Activated CD4-positive, alpha-beta T cell treated with anti-CD3 and anti-CD28 coated beads for 36 hours (primary cell): ENCODE measurements at regions of chr16 and their contacts with region 1.

Region 1: GRCh38 chr16:75647492-75648264 is at the starts of genes KARS1 and TERF2IP:
- DNase-seq: peak; percentile 97
- ATAC-seq: peak; percentile 92
- H3K4me3 Mint-ChIP-seq: peak within 1 kb of the TSS; percentile 85
- H3K27ac Mint-ChIP-seq: peak within 1 kb of the TSS; percentile 98
- H3K4me1 Mint-ChIP-seq: peaks cover 54% of the 10 kb centered on the region
- H3K27me3 Mint-ChIP-seq: no peaks in the 10 kb centered on the region
- total RNA-seq, gene KARS1: 309 to 332 TPM
- total RNA-seq, gene TERF2IP: 70.6 to 72.6 TPM

Region 2: GRCh38 chr16:74666425-74667254 is 981.0 kb before region 1 on chr16 and contains the start of gene RFWD3:
- CTCF ChIA-PET with region 1: no interaction called
- POLR2A ChIA-PET with region 1: no interaction called
- intact Hi-C with region 1: loop called in 1 of 2 experiments (anchors 2 kb)
- DNase-seq: peak; percentile 98
- ATAC-seq: peak; percentile 100
- H3K4me3 Mint-ChIP-seq: peak within 1 kb of the TSS; percentile 83
- H3K27ac Mint-ChIP-seq: peak within 1 kb of the TSS; percentile 97
- H3K4me1 Mint-ChIP-seq: peaks cover 42% of the 10 kb centered on the region
- H3K27me3 Mint-ChIP-seq: no peaks in the 10 kb centered on the region
- total RNA-seq, gene RFWD3: 92.7 to 102 TPM

Region 3: DNA sequence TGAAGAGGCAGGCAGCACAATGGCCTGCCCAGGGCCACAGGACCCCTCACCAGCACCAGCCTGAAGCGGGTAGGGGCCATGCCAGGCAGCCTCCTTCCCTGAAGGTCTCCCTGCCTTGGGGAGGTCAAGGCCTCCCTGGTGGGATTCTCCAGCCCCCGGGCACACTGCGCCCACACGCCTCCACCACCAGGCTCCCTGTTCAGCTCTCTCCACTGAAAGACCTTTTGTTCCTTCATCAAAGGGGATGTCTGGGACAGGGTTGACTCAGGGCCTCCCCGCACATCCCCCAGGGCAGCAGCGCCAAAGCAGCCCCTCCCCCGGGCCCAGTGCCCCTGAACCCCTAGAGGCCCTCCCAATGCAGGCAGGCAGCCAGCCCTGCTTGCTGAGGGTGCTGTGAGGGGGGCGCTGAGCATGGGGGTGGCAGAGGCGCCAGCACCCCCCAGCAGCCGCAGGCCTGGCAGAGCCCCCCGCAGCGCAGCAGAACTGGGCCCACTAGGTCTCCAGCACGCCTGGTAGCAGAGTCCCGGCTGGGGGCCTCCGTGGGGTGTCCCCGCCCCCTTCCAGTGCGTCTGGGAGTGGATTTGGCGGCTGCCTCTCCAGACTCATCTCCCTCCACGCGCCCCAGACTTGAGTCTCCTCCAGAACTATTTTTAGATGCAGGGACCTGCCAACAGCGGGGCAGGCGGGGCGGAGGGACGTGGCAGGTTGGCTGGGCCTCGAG is 409.4 kb before region 1 on chr16:
- CTCF ChIA-PET with region 1: no interaction called
- POLR2A ChIA-PET with region 1: no interaction called
- intact Hi-C with region 1: no loop called
- DNase-seq: no peak
- ATAC-seq: no peak
- H3K4me3 Mint-ChIP-seq: no peak overlapping the region
- H3K27ac Mint-ChIP-seq: no peak overlapping the region
- H3K4me1 Mint-ChIP-seq: peaks cover 2% of the 10 kb centered on the region
- H3K27me3 Mint-ChIP-seq: no peaks in the 10 kb centered on the region

Region 4: GRCh38 chr16:75432828-75433731 is 214.6 kb before region 1 on chr16 and contains the start of gene CFDP1:
- CTCF ChIA-PET with region 1: no interaction called
- POLR2A ChIA-PET with region 1: interaction called, 8 read pairs
- intact Hi-C with region 1: loop called (anchors 1 to 2 kb)
- DNase-seq: peak; percentile 97
- ATAC-seq: peak; percentile 94
- H3K4me3 Mint-ChIP-seq: peak within 1 kb of the TSS; percentile 92
- H3K27ac Mint-ChIP-seq: peak within 1 kb of the TSS; percentile 95
- H3K4me1 Mint-ChIP-seq: peaks cover 39% of the 10 kb centered on the region
- H3K27me3 Mint-ChIP-seq: no peaks in the 10 kb centered on the region
- total RNA-seq, gene CFDP1: 44.0 to 48.2 TPM

Region 5: GRCh38 chr16:75519881-75520280 is 127.8 kb before region 1 on chr16:
- CTCF ChIA-PET with region 1: interaction called, 3 read pairs
- POLR2A ChIA-PET with region 1: interaction called, 3 read pairs
- intact Hi-C with region 1: loop called in 1 of 2 experiments (anchors 1 kb)
- DNase-seq: no peak
- ATAC-seq: no peak
- H3K4me3 Mint-ChIP-seq: no peak overlapping the region
- H3K27ac Mint-ChIP-seq: no peak overlapping the region
- H3K4me1 Mint-ChIP-seq: peaks cover 7% of the 10 kb centered on the region
- H3K27me3 Mint-ChIP-seq: no peaks in the 10 kb centered on the region

Region 6: GRCh38 chr16:75566040-75566810 is 81.5 kb before region 1 on chr16 and contains the start of gene GABARAPL2:
- CTCF ChIA-PET with region 1: interaction called, 4 read pairs
- POLR2A ChIA-PET with region 1: interaction called, 10 read pairs
- intact Hi-C with region 1: loop called (anchors 1 to 2 kb)
- DNase-seq: peak; percentile 94
- ATAC-seq: peak; percentile 72
- H3K4me3 Mint-ChIP-seq: peak within 1 kb of the TSS; percentile 82
- H3K27ac Mint-ChIP-seq: peak within 1 kb of the TSS; percentile 86
- H3K4me1 Mint-ChIP-seq: peaks cover 44% of the 10 kb centered on the region
- H3K27me3 Mint-ChIP-seq: peaks cover 10% of the 10 kb centered on the region
- total RNA-seq, gene GABARAPL2: 31.9 to 58.0 TPM

Region 7: GRCh38 chr16:75764154-75764768 is 116.6 kb after region 1 on chr16:
- CTCF ChIA-PET with region 1: interaction called, 6 read pairs
- POLR2A ChIA-PET with region 1: no interaction called
- intact Hi-C with region 1: loop called (anchors 1 to 2 kb)
- DNase-seq: peak; percentile 70
- ATAC-seq: peak; percentile 93
- H3K4me3 Mint-ChIP-seq: no peak overlapping the region
- H3K27ac Mint-ChIP-seq: no peak overlapping the region
- H3K4me1 Mint-ChIP-seq: peaks cover 11% of the 10 kb centered on the region
- H3K27me3 Mint-ChIP-seq: peaks cover 2% of the 10 kb centered on the region

Region 8: GRCh38 chr16:77211880-77212740 is 1564.4 kb after region 1 on chr16:
- CTCF ChIA-PET with region 1: no interaction called
- POLR2A ChIA-PET with region 1: no interaction called
- intact Hi-C with region 1: loop called in 1 of 2 experiments (anchors 5 kb)
- DNase-seq: peak; percentile 88
- ATAC-seq: peak; percentile 85
- H3K4me3 Mint-ChIP-seq: peak overlapping the region; percentile 71
- H3K27ac Mint-ChIP-seq: peak overlapping the region; percentile 57
- H3K4me1 Mint-ChIP-seq: peaks cover 13% of the 10 kb centered on the region
- H3K27me3 Mint-ChIP-seq: no peaks in the 10 kb centered on the region